ENCODE measurements at regions of chr4 and their contacts with region 1.

Region 1: DNA sequence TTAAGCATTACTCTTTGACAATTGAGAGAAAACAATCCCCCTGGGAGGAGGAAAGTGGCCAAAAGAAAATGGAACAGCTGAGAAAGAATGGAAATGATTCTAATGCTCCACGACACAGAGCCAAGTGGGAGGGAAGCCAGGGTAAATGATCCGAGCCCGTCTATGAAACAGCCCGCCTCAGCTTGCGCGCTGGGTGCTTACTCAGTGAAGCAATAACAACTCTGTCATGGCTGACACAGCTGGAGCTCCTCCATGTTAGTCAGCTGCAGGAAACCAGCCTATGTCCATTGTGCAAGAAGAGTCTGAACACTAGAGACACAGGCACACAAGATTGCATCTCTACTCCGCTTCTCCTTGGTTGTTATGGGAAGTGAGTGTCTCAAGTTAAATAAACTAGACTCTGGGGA is 19.3 kb downstream of the NOA1 start:
- DNase-seq: peak; percentile 53 to 97
- H3K4me3 ChIP-seq: peak overlapping the region in 1 of 2 donors; percentile 25
- H3K27ac ChIP-seq: peak overlapping the region; percentile 28 to 47
- H3K4me1 ChIP-seq: peaks cover 3 to 6% of the 10 kb centered on the region in 2 donors
- H3K27me3 ChIP-seq: no peaks in the 10 kb centered on the region
- CTCF ChIP-seq: no peak

Region 2: GRCh38 chr4:56977321-56978012 is 19.4 kb after region 1 on chr4 and contains the start of gene NOA1:
- intact Hi-C with region 1: loop called (anchors 1 kb)
- DNase-seq: peak; percentile 98 to 100
- H3K4me3 ChIP-seq: peak within 1 kb of the TSS; percentile 84 to 91
- H3K27ac ChIP-seq: peak within 1 kb of the TSS; percentile 90 to 94
- H3K4me1 ChIP-seq: peaks cover 5 to 19% of the 10 kb centered on the region in 2 donors
- H3K27me3 ChIP-seq: no peaks in the 10 kb centered on the region
- CTCF ChIP-seq: no peak
- total RNA-seq, gene NOA1: 36.6 TPM